Heart left ventricle (tissue), 16 donors: ENCODE measurements at regions of chr11 and their contacts with region 1.

Region 1: DNA sequence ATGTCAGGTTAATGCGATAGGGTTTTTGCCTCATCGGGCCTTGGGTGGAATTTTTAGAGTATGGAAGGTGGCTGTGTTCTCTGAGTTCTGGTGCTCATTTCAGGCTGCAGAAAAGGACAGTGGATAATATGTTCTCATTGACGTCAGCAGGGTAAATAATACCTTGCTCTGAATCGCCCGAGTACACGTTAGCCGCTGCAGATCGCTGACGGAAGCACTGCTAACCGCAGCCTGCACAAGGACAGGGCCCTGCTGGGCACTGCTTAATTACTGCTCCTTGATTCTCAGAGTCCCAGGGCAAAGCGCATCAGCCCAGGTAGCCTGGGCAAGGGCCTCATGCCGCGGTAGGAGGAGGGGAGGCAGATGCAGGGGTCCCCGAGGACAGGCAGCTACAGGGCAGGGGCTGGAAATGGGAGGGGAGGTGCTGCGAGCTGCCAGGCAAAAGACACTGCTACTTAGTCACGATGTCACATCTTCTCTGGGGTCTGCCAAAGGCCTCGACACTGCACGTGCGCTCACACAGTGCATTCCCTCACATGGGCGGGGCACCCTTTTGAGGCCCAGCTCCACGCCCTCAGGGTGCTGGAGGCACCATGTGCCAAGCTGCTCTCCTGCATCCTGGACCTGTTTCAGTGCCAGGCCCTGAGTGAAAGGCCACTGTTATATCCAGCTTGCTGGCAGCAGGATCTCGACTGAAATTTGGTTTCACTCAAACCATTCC is 35.2 kb downstream of the PPP2R1B start:
- DNase-seq: peak in 3 of 5 donors; percentile 44 to 65 (median 59)
- ATAC-seq: peak in 3 of 4 donors; percentile 8 to 52 (median 16)
- H3K4me3 ChIP-seq: peak overlapping the region in 5 of 12 donors; percentile 2 to 30 (median 6)
- H3K27ac ChIP-seq: peak overlapping the region; percentile 28 to 98 (median 92)
- H3K4me1 ChIP-seq: peaks cover 2 to 80% (median 70%) of the 10 kb centered on the region in 12 donors
- H3K27me3 ChIP-seq: no peaks in the 10 kb centered on the region
- CTCF ChIP-seq: no peak
- POLR2A ChIP-seq: no peak

Region 2: GRCh38 chr11:111694851-111695250 is 36.2 kb before region 1 on chr11:
- intact Hi-C with region 1: no loop called
- DNase-seq: peak in 1 of 5 donors; percentile 76
- ATAC-seq: peak in 3 of 4 donors; percentile 35 to 90 (median 90)
- H3K4me3 ChIP-seq: no peak overlapping the region
- H3K27ac ChIP-seq: peak overlapping the region in 7 of 12 donors; percentile 1 to 67 (median 27)
- H3K4me1 ChIP-seq: peaks cover 2 to 48% (median 14%) of the 10 kb centered on the region in 12 donors
- H3K27me3 ChIP-seq: no peaks in the 10 kb centered on the region
- CTCF ChIP-seq: no peak
- POLR2A ChIP-seq: no peak

Region 3: GRCh38 chr11:111759778-111760407 is 28.9 kb after region 1 on chr11:
- intact Hi-C with region 1: loop called in 6 of 10 experiments (anchors 1 to 5 kb)
- DNase-seq: no peak
- ATAC-seq: peak in 1 of 4 donors; percentile 63
- H3K4me3 ChIP-seq: no peak overlapping the region
- H3K27ac ChIP-seq: peak overlapping the region in 11 of 12 donors; percentile 17 to 72 (median 61)
- H3K4me1 ChIP-seq: peaks cover 0 to 62% (median 17%) of the 10 kb centered on the region in 12 donors
- H3K27me3 ChIP-seq: no peaks in the 10 kb centered on the region
- CTCF ChIP-seq: no peak
- POLR2A ChIP-seq: no peak

Region 4: GRCh38 chr11:111766093-111766833 is 35.2 kb after region 1 on chr11 and contains the start of gene PPP2R1B:
- intact Hi-C with region 1: loop called in 5 of 10 experiments (anchors 5 kb)
- DNase-seq: peak; percentile 74 to 88 (median 81)
- ATAC-seq: peak; percentile 92 to 99 (median 98)
- H3K4me3 ChIP-seq: peak within 1 kb of the TSS; percentile 66 to 99 (median 90)
- H3K27ac ChIP-seq: peak within 1 kb of the TSS; percentile 66 to 91 (median 84)
- H3K4me1 ChIP-seq: peaks cover 0 to 51% (median 17%) of the 10 kb centered on the region in 12 donors
- H3K27me3 ChIP-seq: no peaks in the 10 kb centered on the region
- CTCF ChIP-seq: no peak
- POLR2A ChIP-seq: peak in 1 of 2 donors; percentile 36
- total RNA-seq, gene PPP2R1B: 6.8 to 99.9 (median 11.8) TPM

Region 5: GRCh38 chr11:111776398-111777093 is 45.5 kb after region 1 on chr11:
- intact Hi-C with region 1: no loop called
- DNase-seq: no peak
- ATAC-seq: no peak
- H3K4me3 ChIP-seq: no peak overlapping the region
- H3K27ac ChIP-seq: no peak overlapping the region
- H3K4me1 ChIP-seq: peaks cover 0 to 16% (median 12%) of the 10 kb centered on the region in 12 donors
- H3K27me3 ChIP-seq: no peaks in the 10 kb centered on the region
- CTCF ChIP-seq: no peak
- POLR2A ChIP-seq: no peak